ENCODE measurements at regions of chr11 and their contacts with region 1.

Region 1: GRCh38 chr11:93791493-93791892 is 7.4 kb downstream of the MED17 start:
- DNase-seq: no peak
- ATAC-seq: no peak

Region 2: DNA sequence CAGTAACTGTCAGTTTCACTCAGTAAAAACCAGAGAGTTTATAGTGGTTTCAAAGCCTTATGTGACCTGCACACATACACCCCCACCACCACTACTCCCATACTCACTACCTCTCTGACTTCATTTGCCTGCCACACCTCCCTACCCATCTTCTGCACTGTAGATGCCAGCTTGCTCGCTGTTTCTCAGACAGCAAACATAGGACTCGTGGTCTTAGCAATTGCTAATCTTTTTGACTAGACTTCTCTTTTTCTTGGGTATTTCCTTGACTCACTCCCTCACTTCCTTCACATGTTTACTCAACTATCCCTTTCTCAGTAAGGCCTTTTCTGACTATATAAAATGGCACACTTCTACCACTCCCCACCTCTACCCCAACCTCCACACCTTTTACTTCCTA is 102.3 kb before region 1 on chr11:
- intact Hi-C with region 1: loop called (anchors 10 kb)
- DNase-seq: no peak
- ATAC-seq: no peak

Measured in left ventricle myocardium superior (tissue), 1 donor.